Activated naive CD4-positive, alpha-beta T cell treated with anti-CD3 and anti-CD28 coated beads for 36 hours (primary cell): ENCODE measurements at regions of chr1 and their contacts with region 1.

Region 1: DNA sequence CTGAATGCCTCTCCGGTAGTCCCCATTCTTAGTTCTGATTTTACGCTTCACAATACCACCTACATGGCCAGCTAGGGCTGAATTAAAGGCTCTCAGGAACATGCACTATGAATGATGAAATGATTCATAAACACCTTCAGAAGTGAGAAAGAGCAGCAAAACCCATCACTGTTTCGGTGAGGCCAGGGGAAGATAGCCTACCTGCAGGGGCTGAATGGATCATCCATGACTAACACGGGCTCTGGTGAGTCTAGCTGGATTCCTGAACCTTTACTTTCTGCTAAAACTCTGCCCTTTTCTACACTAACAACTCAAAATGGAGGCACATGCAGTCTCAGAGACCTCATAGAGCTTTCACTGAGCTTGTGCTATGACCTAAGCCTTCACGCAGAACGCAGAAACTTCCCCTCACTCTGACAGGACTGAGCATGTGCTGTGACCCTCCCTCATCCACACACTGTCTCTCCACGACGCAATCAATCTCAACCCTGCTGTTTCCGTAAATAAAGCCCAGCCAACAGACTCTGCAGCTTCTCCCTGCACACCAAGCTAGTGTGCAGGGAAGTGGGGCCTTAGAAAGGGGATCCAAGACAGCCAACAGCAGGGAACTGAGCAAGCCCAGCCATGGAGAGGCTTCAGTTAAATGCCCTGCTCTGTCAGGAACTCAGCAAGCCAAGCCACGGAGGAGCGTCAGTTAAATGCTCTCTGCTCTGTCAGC is 207.8 kb downstream of the SLC45A1 start:
- DNase-seq: peak; percentile 86
- H3K4me3 Mint-ChIP-seq: no peak overlapping the region
- H3K27ac Mint-ChIP-seq: no peak overlapping the region
- H3K4me1 Mint-ChIP-seq: peaks cover 26% of the 10 kb centered on the region
- H3K27me3 Mint-ChIP-seq: no peaks in the 10 kb centered on the region

Region 2: DNA sequence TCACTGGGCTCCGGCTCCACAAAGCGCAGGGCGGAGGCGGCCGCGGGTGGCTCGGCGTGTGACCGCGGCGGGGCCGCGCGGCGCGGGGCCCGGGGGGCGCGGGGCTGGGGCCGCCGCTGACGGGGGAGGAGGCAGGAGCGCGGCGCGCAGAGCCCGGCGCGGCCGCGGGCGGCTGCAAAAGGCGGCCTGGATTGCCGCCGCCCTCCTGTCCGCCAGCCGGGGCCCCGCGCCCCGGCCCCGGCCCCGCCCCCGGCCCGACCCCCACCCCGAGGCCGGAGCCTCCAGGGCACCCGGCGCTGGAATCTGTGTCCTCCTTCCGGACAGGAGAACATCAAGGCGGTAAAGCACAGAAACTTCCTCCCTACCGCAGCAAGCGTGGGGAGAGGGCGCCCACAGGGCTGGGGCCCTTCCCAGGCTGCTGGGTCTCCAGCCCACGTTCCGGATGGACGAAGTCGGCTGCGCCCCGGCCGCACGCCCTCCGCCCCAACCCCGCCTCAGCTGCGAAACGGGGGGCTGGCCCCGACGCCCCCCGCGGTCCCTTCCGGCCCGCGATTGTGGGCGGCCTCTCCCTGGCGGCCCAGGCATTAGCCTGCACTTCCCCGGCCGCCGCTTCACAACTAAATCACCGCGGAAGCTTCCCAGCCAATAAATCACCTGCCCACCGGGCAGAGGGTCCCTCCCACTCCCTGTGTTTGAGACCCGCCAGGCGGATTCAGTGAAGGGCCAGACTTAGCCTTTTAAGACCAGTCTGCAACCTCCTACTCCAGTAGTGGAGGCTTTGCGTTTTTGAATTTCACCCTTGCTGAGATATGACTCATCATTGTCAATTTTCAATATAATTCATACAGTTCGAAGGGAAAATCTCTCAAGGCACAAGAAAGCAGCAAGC is 101.8 kb before region 1 on chr1:
- CTCF ChIA-PET with region 1: no interaction called
- intact Hi-C with region 1: loop called (anchors 1 kb)
- DNase-seq: peak; percentile 62
- H3K4me3 Mint-ChIP-seq: peak overlapping the region; percentile 85
- H3K27ac Mint-ChIP-seq: peak overlapping the region; percentile 97
- H3K4me1 Mint-ChIP-seq: peaks cover 38% of the 10 kb centered on the region
- H3K27me3 Mint-ChIP-seq: no peaks in the 10 kb centered on the region

Region 3: DNA sequence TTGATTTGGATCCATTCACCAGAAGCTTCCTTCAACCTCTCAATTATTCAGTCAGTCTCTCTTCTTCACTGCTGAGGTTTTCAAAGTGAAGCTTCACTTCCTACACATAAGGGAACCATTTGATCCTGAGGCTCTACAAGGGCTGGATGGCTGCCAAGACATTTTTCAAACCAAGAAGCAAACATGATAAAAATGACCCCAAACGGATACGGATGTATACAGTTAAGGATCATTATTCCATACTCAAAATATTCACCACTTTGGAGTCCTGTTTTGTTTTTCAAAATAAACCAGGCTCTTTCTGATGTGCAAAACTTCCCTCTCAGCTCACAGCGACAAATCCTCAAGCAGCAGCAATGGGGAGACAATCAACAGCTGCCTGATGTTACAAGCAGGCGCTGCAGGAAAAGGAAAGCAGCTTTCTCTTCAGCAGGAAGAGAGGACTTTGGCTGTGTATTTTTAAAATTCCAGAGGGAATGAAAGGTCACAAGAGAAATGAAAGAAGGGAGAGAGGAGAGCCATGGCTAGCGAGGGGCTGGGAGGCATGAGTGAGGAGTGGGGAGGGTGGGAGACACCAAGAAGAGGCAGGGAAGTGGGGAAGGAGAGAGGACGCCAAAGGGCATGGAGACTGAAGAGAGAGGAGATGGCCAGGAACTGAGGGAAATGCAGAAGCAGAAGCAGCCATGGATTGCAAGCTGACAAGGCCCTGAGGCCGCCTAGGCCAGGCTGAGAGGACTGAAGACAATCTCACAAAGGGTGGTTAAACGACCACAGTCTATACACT is 62.4 kb before region 1 on chr1:
- CTCF ChIA-PET with region 1: no interaction called
- intact Hi-C with region 1: loop called (anchors 2 kb)
- DNase-seq: peak; percentile 24
- H3K4me3 Mint-ChIP-seq: no peak overlapping the region
- H3K27ac Mint-ChIP-seq: peak overlapping the region; percentile 54
- H3K4me1 Mint-ChIP-seq: peaks cover 29% of the 10 kb centered on the region
- H3K27me3 Mint-ChIP-seq: no peaks in the 10 kb centered on the region

Region 4: GRCh38 chr1:8497210-8497801 is 28.4 kb before region 1 on chr1:
- CTCF ChIA-PET with region 1: no interaction called
- intact Hi-C with region 1: loop called (anchors 2 kb)
- DNase-seq: no peak
- H3K4me3 Mint-ChIP-seq: no peak overlapping the region
- H3K27ac Mint-ChIP-seq: no peak overlapping the region
- H3K4me1 Mint-ChIP-seq: peaks cover 30% of the 10 kb centered on the region
- H3K27me3 Mint-ChIP-seq: no peaks in the 10 kb centered on the region

Region 5: DNA sequence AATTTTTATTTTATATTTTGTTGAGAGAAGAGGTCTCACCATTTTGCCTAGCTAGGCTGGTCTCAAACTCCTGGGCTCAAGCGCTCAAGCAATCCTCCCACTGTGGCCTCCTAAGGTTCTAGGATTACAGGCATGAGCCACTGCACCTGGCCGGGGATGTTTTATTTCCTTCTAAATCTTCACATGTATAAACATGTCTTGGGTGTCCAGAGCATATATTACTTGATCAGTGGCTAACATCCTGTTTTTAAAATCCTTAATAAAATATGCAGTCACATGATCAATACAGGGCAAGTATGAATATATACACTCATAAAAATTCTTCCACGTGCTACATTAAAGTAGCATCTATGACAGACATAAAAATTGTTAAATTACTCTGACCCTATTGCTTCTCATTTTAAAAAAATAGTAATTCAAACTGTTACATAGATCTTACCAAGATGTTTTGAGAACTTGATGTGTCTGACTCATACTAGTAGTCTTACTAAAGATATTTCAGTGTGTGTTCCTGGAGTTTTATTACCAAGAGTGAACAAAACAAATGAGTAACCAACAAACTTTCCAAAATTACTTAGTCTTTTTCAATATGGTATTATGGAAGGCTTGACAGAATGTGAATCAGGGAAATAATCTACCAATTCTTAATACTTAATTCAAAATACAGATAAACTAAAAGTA is 14.7 kb after region 1 on chr1:
- CTCF ChIA-PET with region 1: interaction called, 7 read pairs
- intact Hi-C with region 1: loop called (anchors 1 kb)
- DNase-seq: no peak
- H3K4me3 Mint-ChIP-seq: no peak overlapping the region
- H3K27ac Mint-ChIP-seq: peak overlapping the region; percentile 56
- H3K4me1 Mint-ChIP-seq: peaks cover 32% of the 10 kb centered on the region
- H3K27me3 Mint-ChIP-seq: no peaks in the 10 kb centered on the region